Activated CD4-positive, alpha-beta T cell treated with anti-CD3 and anti-CD28 coated beads for 36 hours (primary cell): ENCODE measurements at regions of chr2 and their contacts with region 1.

Region 1: GRCh38 chr2:100242891-100243619 is 79.2 kb downstream of the LONRF2 start:
- DNase-seq: peak; percentile 79
- ATAC-seq: peak; percentile 51
- H3K4me3 Mint-ChIP-seq: no peak overlapping the region
- H3K27ac Mint-ChIP-seq: no peak overlapping the region
- H3K4me1 Mint-ChIP-seq: no peaks in the 10 kb centered on the region
- H3K27me3 Mint-ChIP-seq: peaks cover 3% of the 10 kb centered on the region

Region 2: GRCh38 chr2:99559075-99559662 is 683.9 kb before region 1 on chr2:
- CTCF ChIA-PET with region 1: interaction called, 18 read pairs
- POLR2A ChIA-PET with region 1: no interaction called
- intact Hi-C with region 1: loop called (anchors 1 kb)
- DNase-seq: peak; percentile 92
- ATAC-seq: peak; percentile 97
- H3K4me3 Mint-ChIP-seq: no peak overlapping the region
- H3K27ac Mint-ChIP-seq: no peak overlapping the region
- H3K4me1 Mint-ChIP-seq: peaks cover 2% of the 10 kb centered on the region
- H3K27me3 Mint-ChIP-seq: no peaks in the 10 kb centered on the region

Region 3: GRCh38 chr2:99725820-99726219 is 517.2 kb before region 1 on chr2:
- CTCF ChIA-PET with region 1: no interaction called
- POLR2A ChIA-PET with region 1: no interaction called
- intact Hi-C with region 1: loop called in 1 of 2 experiments (anchors 10 kb)
- DNase-seq: no peak
- ATAC-seq: no peak
- H3K4me3 Mint-ChIP-seq: no peak overlapping the region
- H3K27ac Mint-ChIP-seq: no peak overlapping the region
- H3K4me1 Mint-ChIP-seq: no peaks in the 10 kb centered on the region
- H3K27me3 Mint-ChIP-seq: no peaks in the 10 kb centered on the region

Region 4: GRCh38 chr2:99818842-99819241 is 424.2 kb before region 1 on chr2:
- CTCF ChIA-PET with region 1: interaction called, 9 read pairs
- POLR2A ChIA-PET with region 1: no interaction called
- intact Hi-C with region 1: loop called (anchors 1 to 2 kb)
- DNase-seq: no peak
- ATAC-seq: no peak
- H3K4me3 Mint-ChIP-seq: no peak overlapping the region
- H3K27ac Mint-ChIP-seq: no peak overlapping the region
- H3K4me1 Mint-ChIP-seq: no peaks in the 10 kb centered on the region
- H3K27me3 Mint-ChIP-seq: no peaks in the 10 kb centered on the region

Region 5: GRCh38 chr2:100113990-100114433 is 129.0 kb before region 1 on chr2:
- CTCF ChIA-PET with region 1: no interaction called
- POLR2A ChIA-PET with region 1: no interaction called
- intact Hi-C with region 1: loop called in 1 of 2 experiments (anchors 5 kb)
- DNase-seq: peak; percentile 12
- ATAC-seq: peak; percentile 49
- H3K4me3 Mint-ChIP-seq: no peak overlapping the region
- H3K27ac Mint-ChIP-seq: no peak overlapping the region
- H3K4me1 Mint-ChIP-seq: peaks cover 23% of the 10 kb centered on the region
- H3K27me3 Mint-ChIP-seq: no peaks in the 10 kb centered on the region